Caco-2 (cell line): ENCODE measurements at regions of chr2 and their contacts with region 1.

Region 1: GRCh38 chr2:29923110-29923721 is 1.8 kb upstream of the ALK start:
- DNase-seq: peak; percentile 52 to 69
- H3K4me3 ChIP-seq: no peak overlapping the region
- H3K4me3 Mint-ChIP-seq: no peak overlapping the region
- H3K27ac Mint-ChIP-seq: no peak overlapping the region
- H3K4me1 ChIP-seq: no peaks in the 10 kb centered on the region
- H3K4me1 Mint-ChIP-seq: no peaks in the 10 kb centered on the region
- H3K27me3 ChIP-seq: no peaks in the 10 kb centered on the region
- H3K27me3 Mint-ChIP-seq: peaks cover 15% of the 10 kb centered on the region
- CTCF ChIP-seq: peak; percentile 90 to 92

Region 2: DNA sequence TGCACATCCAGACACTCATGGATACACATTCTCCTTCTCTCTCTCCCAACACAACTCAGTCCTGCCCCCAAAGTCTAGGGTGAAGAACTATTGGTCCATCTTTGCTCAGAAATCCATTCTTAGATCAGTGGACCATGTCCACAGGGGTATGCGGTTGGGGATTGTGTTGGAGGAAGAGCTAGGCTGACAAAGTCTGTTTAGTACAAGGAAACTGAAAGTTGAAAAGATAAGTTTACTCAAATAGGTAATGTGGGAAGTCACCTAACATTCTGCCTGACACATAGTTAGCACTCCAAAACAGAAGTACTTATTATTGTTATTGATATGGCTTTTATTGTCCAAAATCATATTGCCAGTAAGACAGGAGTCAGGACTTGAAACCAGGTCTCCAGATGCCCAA is 57.7 kb before region 1 on chr2:
- CTCF ChIA-PET with region 1: no interaction called
- POLR2A ChIA-PET with region 1: no interaction called
- intact Hi-C with region 1: no loop called
- DNase-seq: no peak
- H3K4me3 ChIP-seq: no peak overlapping the region
- H3K4me3 Mint-ChIP-seq: no peak overlapping the region
- H3K27ac Mint-ChIP-seq: no peak overlapping the region
- H3K4me1 ChIP-seq: no peaks in the 10 kb centered on the region
- H3K4me1 Mint-ChIP-seq: no peaks in the 10 kb centered on the region
- H3K27me3 ChIP-seq: no peaks in the 10 kb centered on the region; the same call in 1 of the 2 replicates
- H3K27me3 Mint-ChIP-seq: peaks cover 18% of the 10 kb centered on the region
- CTCF ChIP-seq: no peak

Region 3: GRCh38 chr2:30026087-30027055 is 103.2 kb after region 1 on chr2:
- CTCF ChIA-PET with region 1: interaction called, 8 read pairs
- POLR2A ChIA-PET with region 1: no interaction called
- intact Hi-C with region 1: loop called (anchors 1 kb)
- DNase-seq: peak; percentile 64 to 65
- H3K4me3 ChIP-seq: no peak overlapping the region
- H3K4me3 Mint-ChIP-seq: no peak overlapping the region
- H3K27ac Mint-ChIP-seq: no peak overlapping the region
- H3K4me1 ChIP-seq: no peaks in the 10 kb centered on the region
- H3K4me1 Mint-ChIP-seq: no peaks in the 10 kb centered on the region
- H3K27me3 ChIP-seq: peaks cover 1% of the 10 kb centered on the region
- H3K27me3 Mint-ChIP-seq: peaks cover 21% of the 10 kb centered on the region
- CTCF ChIP-seq: peak; percentile 81 to 91

Region 4: GRCh38 chr2:30072250-30072842 is 149.1 kb after region 1 on chr2:
- CTCF ChIA-PET with region 1: interaction called, 19 read pairs
- POLR2A ChIA-PET with region 1: no interaction called
- intact Hi-C with region 1: loop called (anchors 1 kb)
- DNase-seq: peak; percentile 71 to 76
- H3K4me3 ChIP-seq: no peak overlapping the region
- H3K4me3 Mint-ChIP-seq: no peak overlapping the region
- H3K27ac Mint-ChIP-seq: no peak overlapping the region
- H3K4me1 ChIP-seq: peaks cover 8% of the 10 kb centered on the region; the same call in 1 of the 2 replicates
- H3K4me1 Mint-ChIP-seq: no peaks in the 10 kb centered on the region
- H3K27me3 ChIP-seq: no peaks in the 10 kb centered on the region; the same call in 1 of the 2 replicates
- H3K27me3 Mint-ChIP-seq: peaks cover 32% of the 10 kb centered on the region
- CTCF ChIP-seq: peak; percentile 79 to 81

Region 5: DNA sequence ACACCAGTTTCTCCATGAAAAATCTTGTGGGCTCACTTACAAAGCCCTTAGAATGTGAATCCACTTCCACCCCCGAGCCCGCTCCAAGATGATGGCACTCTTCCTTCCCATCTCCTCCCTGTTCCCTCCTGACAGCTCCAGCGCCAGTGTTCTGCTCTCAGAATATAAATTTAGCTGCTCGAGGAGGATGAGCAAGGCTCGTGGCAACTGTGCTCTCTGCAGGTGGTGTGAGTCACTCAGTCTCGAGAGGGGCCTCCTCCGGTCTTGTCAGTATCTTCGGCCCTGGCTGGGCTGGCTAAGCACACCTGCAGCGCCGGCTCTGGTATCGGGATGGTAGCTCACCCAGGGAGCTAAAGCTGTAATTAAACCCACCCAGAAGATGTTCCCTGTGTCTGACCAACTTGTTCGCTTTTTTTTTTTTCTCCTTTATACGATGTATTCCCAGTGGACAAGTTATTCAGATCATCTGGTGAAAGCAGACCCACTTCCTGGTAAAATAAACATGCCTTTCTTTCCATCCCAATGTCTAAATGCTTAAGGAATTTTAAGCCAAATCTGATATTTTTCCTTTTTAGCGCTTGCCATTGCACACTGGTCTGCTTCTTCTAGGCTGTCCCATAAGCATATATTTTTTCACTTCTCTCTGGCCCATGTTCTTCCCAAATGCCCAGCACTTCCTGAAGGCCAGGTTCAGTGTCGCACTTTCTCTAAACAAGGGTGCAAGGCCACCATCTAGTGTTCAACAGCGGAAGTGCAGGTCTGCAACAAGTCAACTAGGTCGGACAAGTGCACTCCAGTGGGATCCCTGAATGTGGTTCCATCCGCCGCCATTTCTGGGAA is 192.1 kb after region 1 on chr2:
- CTCF ChIA-PET with region 1: no interaction called
- POLR2A ChIA-PET with region 1: no interaction called
- intact Hi-C with region 1: loop called (anchors 1 kb)
- DNase-seq: peak; percentile 77 to 82
- H3K4me3 ChIP-seq: no peak overlapping the region
- H3K4me3 Mint-ChIP-seq: no peak overlapping the region
- H3K27ac Mint-ChIP-seq: no peak overlapping the region
- H3K4me1 ChIP-seq: no peaks in the 10 kb centered on the region
- H3K4me1 Mint-ChIP-seq: no peaks in the 10 kb centered on the region
- H3K27me3 ChIP-seq: no peaks in the 10 kb centered on the region
- H3K27me3 Mint-ChIP-seq: peaks cover 12% of the 10 kb centered on the region
- CTCF ChIP-seq: peak; percentile 87 to 94